B cell (primary cell): ENCODE measurements at regions of chrX and their contacts with region 1.

Region 1: DNA sequence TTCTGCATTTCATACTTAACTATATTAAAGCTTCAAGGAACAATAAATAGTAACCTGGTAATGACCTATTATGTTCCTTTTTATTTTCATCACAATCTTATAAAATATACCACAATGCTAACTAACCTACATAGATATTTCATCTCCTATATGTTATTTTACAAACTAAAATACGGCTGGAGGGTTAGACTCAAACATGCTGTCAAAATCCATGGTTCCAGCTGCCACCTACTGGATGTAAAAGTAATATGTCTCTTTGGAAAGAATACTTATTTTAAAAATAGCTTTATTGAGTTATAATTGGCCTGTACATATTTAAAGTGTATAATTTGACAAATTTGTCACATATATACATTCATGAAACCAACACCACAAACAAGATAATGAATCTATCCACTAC is 15.0 kb downstream of the RGN start:
- DNase-seq: peak; percentile 30
- ATAC-seq: no peak
- H3K4me3 ChIP-seq: no peak overlapping the region
- H3K4me3 Mint-ChIP-seq: no peak overlapping the region
- H3K27ac ChIP-seq: no peak overlapping the region
- H3K27ac Mint-ChIP-seq: no peak overlapping the region
- H3K4me1 ChIP-seq: no peaks in the 10 kb centered on the region
- H3K4me1 Mint-ChIP-seq: no peaks in the 10 kb centered on the region
- H3K27me3 ChIP-seq: no peaks in the 10 kb centered on the region
- H3K27me3 Mint-ChIP-seq: no peaks in the 10 kb centered on the region
- CTCF ChIP-seq: peak; percentile 64

Region 2: GRCh38 chrX:46803140-46803539 is 290.1 kb before region 1 on chrX:
- CTCF ChIA-PET with region 1: interaction called, 4 read pairs
- POLR2A ChIA-PET with region 1: no interaction called
- intact Hi-C with region 1: loop called (anchors 2 kb)
- DNase-seq: peak; percentile 2
- ATAC-seq: no peak
- H3K4me3 ChIP-seq: no peak overlapping the region
- H3K4me3 Mint-ChIP-seq: no peak overlapping the region
- H3K27ac ChIP-seq: no peak overlapping the region
- H3K27ac Mint-ChIP-seq: no peak overlapping the region
- H3K4me1 ChIP-seq: no peaks in the 10 kb centered on the region
- H3K4me1 Mint-ChIP-seq: no peaks in the 10 kb centered on the region
- H3K27me3 ChIP-seq: no peaks in the 10 kb centered on the region
- H3K27me3 Mint-ChIP-seq: no peaks in the 10 kb centered on the region
- CTCF ChIP-seq: no peak

Region 3: GRCh38 chrX:48911412-48912182 is 1818.3 kb after region 1 on chrX and contains the start of gene SLC35A2:
- CTCF ChIA-PET with region 1: no interaction called
- POLR2A ChIA-PET with region 1: no interaction called
- intact Hi-C with region 1: no loop called
- DNase-seq: peak; percentile 90
- ATAC-seq: peak; percentile 76
- H3K4me3 ChIP-seq: peak within 1 kb of the TSS; percentile 60 to 78 (median 66)
- H3K4me3 Mint-ChIP-seq: peak within 1 kb of the TSS; percentile 86
- H3K27ac ChIP-seq: peak within 1 kb of the TSS; percentile 86 to 90
- H3K27ac Mint-ChIP-seq: peak within 1 kb of the TSS; percentile 88
- H3K4me1 ChIP-seq: peaks cover 28 to 49% of the 10 kb centered on the region in 2 donors
- H3K4me1 Mint-ChIP-seq: peaks cover 48% of the 10 kb centered on the region
- H3K27me3 ChIP-seq: no peaks in the 10 kb centered on the region
- H3K27me3 Mint-ChIP-seq: no peaks in the 10 kb centered on the region
- CTCF ChIP-seq: no peak
- total RNA-seq, gene SLC35A2: 19.1 and 24.1 TPM in 2 replicates